GM12878 (cell line): ENCODE measurements at regions of chr13 and their contacts with region 1.

Region 1: DNA sequence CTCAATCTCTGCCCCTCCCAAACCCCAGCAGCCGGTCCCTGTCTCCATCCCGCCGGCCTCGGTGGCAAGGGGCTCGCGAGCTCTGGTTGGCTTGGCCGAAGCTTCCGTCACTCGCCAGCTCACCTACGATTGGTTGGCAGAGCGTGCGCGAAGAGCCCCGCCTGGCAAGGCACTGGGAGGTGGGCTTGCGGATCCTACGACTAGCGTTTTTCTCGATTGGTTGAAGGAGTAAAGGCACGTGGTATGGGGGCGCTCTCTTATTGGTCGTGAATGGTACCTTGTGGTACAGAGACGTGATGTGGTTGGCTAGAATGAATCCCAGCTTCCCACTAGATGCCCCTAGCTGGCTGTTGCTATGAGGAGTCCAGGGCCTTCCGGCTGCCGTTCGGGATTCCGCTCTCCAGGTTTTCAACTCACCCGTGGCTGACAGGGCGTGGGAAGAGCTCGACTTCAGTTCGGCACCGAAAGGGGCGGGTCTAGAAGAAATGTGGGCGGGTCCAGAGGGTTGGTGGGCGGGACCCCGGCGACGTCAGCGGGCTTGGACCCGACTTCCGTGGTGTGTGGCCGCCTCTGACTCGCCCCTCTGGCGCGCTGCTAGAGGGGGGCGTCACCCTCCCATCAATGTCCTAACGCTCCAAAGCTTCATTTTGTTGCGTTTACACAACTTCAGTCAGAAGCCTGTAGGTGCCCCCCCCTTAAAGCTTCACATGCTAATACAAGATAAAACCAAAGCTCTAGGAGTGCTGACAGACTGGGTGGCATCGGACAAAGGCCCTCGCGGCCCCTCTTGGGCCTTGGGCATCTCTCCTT is 847 bp upstream of the RAP2A start:
- DNase-seq: peak; percentile 100
- ATAC-seq: peak; percentile 86
- H3K4me3 ChIP-seq: peak overlapping the region; percentile 82
- H3K27ac ChIP-seq: peak overlapping the region; percentile 98
- H3K4me1 ChIP-seq: peaks cover 6% of the 10 kb centered on the region
- H3K27me3 ChIP-seq: no peaks in the 10 kb centered on the region
- CTCF ChIP-seq: no peak
- EP300 ChIP-seq: peak; percentile 45 to 61; a peak in 3 of 4 replicates
- POLR2A ChIP-seq: peak; percentile 74
- RAD21 ChIP-seq: no peak

Region 2: DNA sequence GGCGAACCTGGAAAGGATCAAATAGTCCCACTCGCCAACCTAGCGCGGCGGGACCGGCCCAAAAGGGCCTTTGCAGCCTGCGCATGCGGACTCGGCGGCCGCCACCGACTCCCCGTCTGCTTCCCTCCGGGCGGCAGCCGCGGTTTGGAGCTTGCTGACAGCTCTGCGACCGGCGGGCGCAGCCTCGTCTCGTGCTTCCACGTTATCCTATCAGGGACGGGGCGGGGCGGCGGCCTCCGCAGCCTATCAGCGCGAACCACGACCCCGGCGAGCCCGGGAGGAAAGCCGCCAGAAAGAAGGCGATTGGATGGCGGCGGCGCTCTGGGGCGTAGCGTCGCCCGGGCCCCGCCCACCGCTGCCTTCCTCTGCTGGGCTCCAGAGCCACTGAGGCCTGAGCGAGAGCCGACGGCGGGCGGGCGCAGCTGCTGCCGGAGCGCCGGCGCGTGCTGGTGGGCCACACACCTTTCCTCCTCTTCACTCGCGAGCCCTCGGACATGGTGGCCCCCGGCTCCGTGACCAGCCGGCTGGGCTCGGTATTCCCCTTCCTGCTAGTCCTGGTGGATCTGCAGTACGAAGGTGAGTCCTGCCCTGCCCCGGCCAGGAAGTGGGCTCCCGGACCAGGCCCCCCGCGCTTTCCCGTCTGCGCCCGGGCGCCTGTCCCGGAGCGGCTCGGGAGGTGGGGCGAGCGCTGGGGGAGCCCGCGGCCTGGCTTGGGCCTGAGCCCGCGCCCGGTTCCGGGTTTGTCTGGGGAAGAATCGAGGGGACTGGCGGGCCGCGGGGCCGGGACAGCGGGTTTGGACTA is 1756.2 kb before region 1 on chr13 and contains the start of gene DNAJC3:
- CTCF ChIA-PET with region 1: no interaction called
- POLR2A ChIA-PET with region 1: no interaction called
- RAD21 ChIA-PET with region 1: no interaction called
- SMC1A ChIA-PET with region 1: no interaction called
- in situ Hi-C with region 1: loop called (anchors 25 kb)
- intact Hi-C with region 1: loop called (anchors 5 kb)
- DNase-seq: peak; percentile 87
- ATAC-seq: peak; percentile 95
- H3K4me3 ChIP-seq: peak within 1 kb of the TSS; percentile 94
- H3K27ac ChIP-seq: peak within 1 kb of the TSS; percentile 90
- H3K4me1 ChIP-seq: no peaks in the 10 kb centered on the region
- H3K27me3 ChIP-seq: no peaks in the 10 kb centered on the region
- CTCF ChIP-seq: no peak
- EP300 ChIP-seq: no peak
- POLR2A ChIP-seq: peak; percentile 98
- RAD21 ChIP-seq: no peak
- polyA plus RNA-seq, gene DNAJC3: 9.3 to 19.0 TPM

Region 3: DNA sequence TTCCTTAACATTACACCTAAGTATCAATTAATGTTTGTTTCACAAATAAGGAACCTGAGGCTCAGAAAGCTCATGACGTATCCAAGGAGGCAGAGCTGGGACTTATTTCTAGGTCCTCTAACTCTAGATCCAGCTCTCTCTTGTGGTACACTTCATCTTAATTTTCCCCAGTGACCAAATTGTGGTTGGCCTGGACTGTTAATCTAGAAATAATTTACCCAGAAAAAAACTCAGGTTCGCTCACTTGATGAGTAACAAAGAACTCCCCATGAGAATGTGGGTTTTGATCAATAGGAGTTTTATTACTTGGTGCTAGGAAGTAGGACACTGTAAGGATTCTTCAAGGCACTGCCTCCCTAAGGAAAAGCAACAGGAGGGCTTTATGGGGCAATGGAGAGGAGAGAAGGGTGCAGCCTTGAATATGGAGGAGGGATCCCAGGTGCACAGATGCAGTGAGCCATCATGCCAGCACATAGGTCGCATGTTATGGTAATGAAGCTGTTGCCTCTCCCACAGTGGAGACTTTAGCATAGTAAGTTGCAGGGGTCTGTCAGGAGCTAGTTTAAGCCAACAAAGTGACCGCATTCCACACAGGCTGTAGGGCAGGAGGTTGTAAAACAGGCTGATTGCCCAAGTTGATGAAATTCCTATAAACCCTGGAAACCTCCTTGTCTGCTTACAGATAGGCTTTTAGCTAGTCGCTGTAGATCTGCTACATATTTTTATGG is 15.5 kb after region 1 on chr13:
- CTCF ChIA-PET with region 1: interaction called, 25 read pairs
- POLR2A ChIA-PET with region 1: interaction called, 79 read pairs
- RAD21 ChIA-PET with region 1: interaction called, 27 read pairs
- SMC1A ChIA-PET with region 1: interaction called, 37 read pairs
- in situ Hi-C with region 1: no loop called
- intact Hi-C with region 1: loop called (anchors 2 kb)
- DNase-seq: peak; percentile 45
- ATAC-seq: peak; percentile 77
- H3K4me3 ChIP-seq: no peak overlapping the region
- H3K27ac ChIP-seq: no peak overlapping the region
- H3K4me1 ChIP-seq: no peaks in the 10 kb centered on the region
- H3K27me3 ChIP-seq: no peaks in the 10 kb centered on the region
- CTCF ChIP-seq: no peak
- EP300 ChIP-seq: no peak
- POLR2A ChIP-seq: no peak
- RAD21 ChIP-seq: no peak

Region 4: DNA sequence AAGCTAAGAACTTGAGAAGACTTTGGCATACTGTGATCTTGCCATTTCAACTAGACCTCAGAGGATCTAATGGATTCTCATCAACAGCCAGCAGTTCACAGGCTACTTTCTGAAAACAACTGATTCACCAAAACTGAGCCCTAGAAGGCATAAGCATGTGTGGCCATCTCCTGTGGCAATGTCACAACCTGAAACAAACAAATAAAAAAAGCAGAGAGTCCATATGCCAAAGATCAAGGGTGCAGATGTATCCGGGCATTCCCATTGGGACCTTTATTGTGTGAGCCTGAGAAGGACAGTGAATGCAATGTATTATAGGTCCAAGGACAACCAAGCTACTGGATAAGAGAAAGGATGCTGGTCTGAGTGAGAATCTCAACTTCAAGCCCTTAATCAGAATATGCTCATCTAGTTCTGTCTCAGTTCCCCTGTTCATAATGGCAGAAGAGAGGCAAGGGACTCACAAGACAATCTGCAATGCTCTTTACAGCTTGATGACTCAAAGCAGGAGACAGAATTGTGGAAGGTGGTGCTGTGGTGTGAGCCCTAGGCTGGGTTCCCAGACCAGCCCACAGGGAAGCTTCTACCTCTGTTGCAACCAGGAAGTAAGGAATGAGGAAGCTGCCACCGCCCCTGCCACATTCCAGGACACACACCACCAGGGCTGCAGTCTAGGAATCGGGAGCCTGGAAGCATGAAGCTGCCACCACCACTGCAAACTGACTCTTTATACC is 134.6 kb after region 1 on chr13:
- CTCF ChIA-PET with region 1: interaction called, 8 read pairs
- POLR2A ChIA-PET with region 1: interaction called, 3 read pairs
- RAD21 ChIA-PET with region 1: interaction called, 10 read pairs
- SMC1A ChIA-PET with region 1: interaction called, 10 read pairs
- in situ Hi-C with region 1: no loop called
- intact Hi-C with region 1: loop called (anchors 5 kb)
- DNase-seq: peak; percentile 37
- ATAC-seq: peak; percentile 92
- H3K4me3 ChIP-seq: no peak overlapping the region
- H3K27ac ChIP-seq: no peak overlapping the region
- H3K4me1 ChIP-seq: no peaks in the 10 kb centered on the region
- H3K27me3 ChIP-seq: no peaks in the 10 kb centered on the region
- CTCF ChIP-seq: no peak
- EP300 ChIP-seq: no peak; a peak in 1 of 4 replicates
- POLR2A ChIP-seq: no peak
- RAD21 ChIP-seq: no peak

Region 5: GRCh38 chr13:97975848-97976609 is 542.9 kb after region 1 on chr13:
- CTCF ChIA-PET with region 1: no interaction called
- POLR2A ChIA-PET with region 1: no interaction called
- RAD21 ChIA-PET with region 1: no interaction called
- SMC1A ChIA-PET with region 1: no interaction called
- in situ Hi-C with region 1: no loop called
- intact Hi-C with region 1: loop called (anchors 10 kb)
- DNase-seq: no peak
- ATAC-seq: peak; percentile 94
- H3K4me3 ChIP-seq: peak overlapping the region; percentile 81
- H3K27ac ChIP-seq: peak overlapping the region; percentile 82
- H3K4me1 ChIP-seq: peaks cover 3% of the 10 kb centered on the region; the same call in 1 of the 2 replicates
- H3K27me3 ChIP-seq: no peaks in the 10 kb centered on the region
- CTCF ChIP-seq: no peak
- EP300 ChIP-seq: no peak
- POLR2A ChIP-seq: peak; percentile 85
- RAD21 ChIP-seq: no peak